A549 (cell line): ENCODE measurements at regions of chr21 and their contacts with region 1.

Region 1: GRCh38 chr21:45098867-45099266 is 24.5 kb downstream of the ADARB1 start:
- DNase-seq: peak in 1 of 2 experiments; percentile 14
- ATAC-seq: peak; percentile 68 to 69; a peak in 4 of 6 replicates
- H3K4me3 ChIP-seq: no peak overlapping the region
- H3K27ac ChIP-seq: no peak overlapping the region
- H3K4me1 ChIP-seq: peaks cover 11% of the 10 kb centered on the region; the same call in 2 of the 3 replicates
- CTCF ChIP-seq: peak; percentile 33; the same call in 2 of the 3 replicates
- EP300 ChIP-seq: no peak
- POLR2A ChIP-seq: no peak
- RAD21 ChIP-seq: peak in 1 of 2 experiments; percentile 17; a peak in 1 of 5 replicates

Region 2: GRCh38 chr21:44949779-44950198 is 149.1 kb before region 1 on chr21:
- CTCF ChIA-PET with region 1: interaction called, 16 read pairs
- POLR2A ChIA-PET with region 1: no interaction called
- DNase-seq: peak; percentile 65 to 70
- ATAC-seq: peak; percentile 67 to 93
- H3K4me3 ChIP-seq: no peak overlapping the region
- H3K27ac ChIP-seq: peak overlapping the region in 1 of 2 experiments; percentile 88; a peak in 3 of 6 replicates
- H3K4me1 ChIP-seq: peaks cover 36% of the 10 kb centered on the region
- CTCF ChIP-seq: peak; percentile 67
- EP300 ChIP-seq: no peak
- POLR2A ChIP-seq: no peak
- RAD21 ChIP-seq: peak; percentile 76

Region 3: DNA sequence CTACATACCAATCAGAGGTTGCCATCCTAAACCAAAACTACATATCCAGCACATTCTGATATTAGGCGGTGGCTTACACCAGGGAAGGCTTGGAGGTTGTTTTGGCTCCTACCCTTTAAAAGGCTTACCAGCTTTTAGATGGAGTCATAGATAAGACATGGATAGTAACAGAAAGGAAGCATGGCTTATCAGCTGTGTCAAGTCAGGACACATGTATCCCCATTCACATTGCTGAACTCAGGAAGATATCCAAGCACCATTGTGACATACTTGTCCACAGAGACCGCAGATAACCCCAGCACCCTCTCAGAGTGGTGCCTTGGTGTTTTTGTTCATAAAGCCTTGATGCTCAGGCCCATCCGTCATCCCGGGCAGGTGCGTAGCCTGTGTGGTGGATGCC is 15.2 kb after region 1 on chr21:
- CTCF ChIA-PET with region 1: interaction called, 11 read pairs
- POLR2A ChIA-PET with region 1: no interaction called
- DNase-seq: no peak
- ATAC-seq: no peak
- H3K4me3 ChIP-seq: no peak overlapping the region
- H3K27ac ChIP-seq: no peak overlapping the region
- H3K4me1 ChIP-seq: no peaks in the 10 kb centered on the region
- CTCF ChIP-seq: no peak
- EP300 ChIP-seq: no peak
- POLR2A ChIP-seq: no peak
- RAD21 ChIP-seq: no peak

Region 4: GRCh38 chr21:45248893-45249381 is 150.1 kb after region 1 on chr21:
- CTCF ChIA-PET with region 1: no interaction called
- POLR2A ChIA-PET with region 1: no interaction called
- DNase-seq: no peak
- ATAC-seq: peak; percentile 51 to 57; a peak in 5 of 6 replicates
- H3K4me3 ChIP-seq: no peak overlapping the region
- H3K27ac ChIP-seq: no peak overlapping the region
- H3K4me1 ChIP-seq: no peaks in the 10 kb centered on the region
- CTCF ChIP-seq: no peak
- EP300 ChIP-seq: no peak
- POLR2A ChIP-seq: no peak
- RAD21 ChIP-seq: no peak